SK-N-SH (cell line): ENCODE measurements at regions of chr19 and their contacts with region 1.

Region 1: GRCh38 chr19:11125994-11126685 is 29.4 kb downstream of the SPC24 start:
- DNase-seq: peak; percentile 82
- H3K4me3 ChIP-seq: no peak overlapping the region; a peak in 1 of 4 replicates
- H3K27ac ChIP-seq: no peak overlapping the region
- H3K4me1 ChIP-seq: no peaks in the 10 kb centered on the region
- H3K27me3 ChIP-seq: no peaks in the 10 kb centered on the region
- CTCF ChIP-seq: peak; percentile 90
- EP300 ChIP-seq: no peak
- RAD21 ChIP-seq: peak; percentile 67

Region 2: DNA sequence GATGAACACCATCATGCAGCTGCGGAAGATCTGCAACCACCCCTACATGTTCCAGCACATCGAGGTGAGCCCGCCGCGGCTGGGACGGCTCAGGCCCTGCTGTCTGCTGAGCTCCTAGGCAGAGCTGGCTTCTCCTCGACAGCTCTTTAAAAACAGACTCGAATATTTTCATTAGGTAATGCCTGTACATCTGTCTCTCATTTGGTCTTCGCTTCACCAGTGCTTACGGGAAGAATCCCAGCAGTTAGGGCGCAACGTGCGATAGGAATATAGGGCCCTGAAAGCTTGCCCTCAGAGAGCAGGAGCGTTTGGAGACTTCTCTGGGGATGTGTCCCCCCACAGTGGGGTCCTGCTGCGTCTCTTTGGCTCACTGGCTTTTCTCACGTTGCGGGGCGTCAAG is 100.7 kb before region 1 on chr19:
- CTCF ChIA-PET with region 1: interaction called, 11 read pairs
- POLR2A ChIA-PET with region 1: no interaction called
- DNase-seq: no peak
- H3K4me3 ChIP-seq: no peak overlapping the region
- H3K27ac ChIP-seq: no peak overlapping the region
- H3K4me1 ChIP-seq: no peaks in the 10 kb centered on the region; a peak in 1 of 4 replicates
- H3K27me3 ChIP-seq: no peaks in the 10 kb centered on the region
- CTCF ChIP-seq: no peak
- EP300 ChIP-seq: no peak
- RAD21 ChIP-seq: no peak

Region 3: GRCh38 chr19:11064831-11065303 is 61.3 kb before region 1 on chr19:
- CTCF ChIA-PET with region 1: interaction called, 10 read pairs
- POLR2A ChIA-PET with region 1: no interaction called
- DNase-seq: no peak
- H3K4me3 ChIP-seq: no peak overlapping the region
- H3K27ac ChIP-seq: no peak overlapping the region; a peak in 1 of 4 replicates
- H3K4me1 ChIP-seq: no peaks in the 10 kb centered on the region
- H3K27me3 ChIP-seq: no peaks in the 10 kb centered on the region
- CTCF ChIP-seq: no peak
- EP300 ChIP-seq: no peak
- RAD21 ChIP-seq: no peak

Region 4: GRCh38 chr19:11100049-11100448 is 26.1 kb before region 1 on chr19:
- CTCF ChIA-PET with region 1: interaction called, 15 read pairs
- POLR2A ChIA-PET with region 1: no interaction called
- DNase-seq: no peak
- H3K4me3 ChIP-seq: no peak overlapping the region
- H3K27ac ChIP-seq: no peak overlapping the region
- H3K4me1 ChIP-seq: peaks cover 0 to 18% of the 10 kb centered on the region in 2 experiments; a peak in 2 of 4 replicates
- H3K27me3 ChIP-seq: no peaks in the 10 kb centered on the region
- CTCF ChIP-seq: no peak
- EP300 ChIP-seq: no peak
- RAD21 ChIP-seq: no peak

Region 5: GRCh38 chr19:11137542-11138384 is 11.6 kb after region 1 on chr19:
- CTCF ChIA-PET with region 1: interaction called, 46 read pairs
- POLR2A ChIA-PET with region 1: no interaction called
- DNase-seq: peak; percentile 90
- H3K4me3 ChIP-seq: peak overlapping the region; percentile 22 to 45
- H3K27ac ChIP-seq: peak overlapping the region; percentile 83 to 86
- H3K4me1 ChIP-seq: peaks cover 20 to 27% of the 10 kb centered on the region in 2 experiments; a peak in 3 of 4 replicates
- H3K27me3 ChIP-seq: no peaks in the 10 kb centered on the region
- CTCF ChIP-seq: peak; percentile 75
- EP300 ChIP-seq: no peak; a peak in 1 of 4 replicates
- RAD21 ChIP-seq: peak; percentile 88

Region 6: DNA sequence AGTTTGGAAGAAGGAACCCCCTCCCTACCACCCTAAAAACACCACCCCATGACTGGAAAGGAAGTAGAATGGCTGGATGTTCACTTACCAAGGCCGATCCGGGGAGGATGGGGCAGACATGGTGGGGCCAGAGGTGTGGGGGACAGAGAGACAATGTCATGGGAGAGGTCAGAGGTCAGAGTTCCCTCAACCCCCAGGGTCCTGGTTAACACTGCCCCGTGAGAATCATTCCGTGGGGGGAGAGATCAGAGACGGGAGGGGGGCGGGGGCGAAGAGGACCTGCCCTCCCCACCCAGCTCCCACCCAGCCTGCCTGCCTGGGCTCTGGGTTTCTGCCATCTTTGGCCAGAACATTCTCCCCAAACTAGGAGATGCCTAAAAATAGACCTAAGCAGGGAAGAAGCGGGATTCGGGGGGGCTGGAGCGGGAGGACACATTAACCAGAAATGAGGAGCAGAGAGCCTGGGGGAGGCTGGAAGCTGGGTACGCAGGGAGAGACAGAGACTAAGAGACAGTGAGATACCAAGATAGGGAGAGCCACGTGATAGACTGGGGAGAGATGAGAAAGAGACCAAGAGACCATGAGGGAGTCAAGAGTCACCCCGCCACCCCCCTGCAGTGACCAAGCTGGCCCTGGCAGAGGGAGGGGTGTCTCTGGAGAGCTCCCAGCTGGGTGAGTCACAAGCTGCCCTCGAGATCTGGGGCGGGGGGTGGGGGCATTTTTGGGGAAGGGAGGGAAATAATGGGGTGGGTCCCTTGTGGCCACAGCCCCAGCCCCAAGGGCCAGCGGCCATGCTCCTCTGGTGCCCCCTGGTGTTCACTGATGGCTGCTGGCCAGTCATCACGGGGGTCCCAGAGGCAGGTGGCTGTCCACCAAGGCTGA is 77.3 kb after region 1 on chr19:
- CTCF ChIA-PET with region 1: interaction called, 21 read pairs
- POLR2A ChIA-PET with region 1: interaction called, 3 read pairs
- DNase-seq: peak; percentile 93
- H3K4me3 ChIP-seq: no peak overlapping the region
- H3K27ac ChIP-seq: peak overlapping the region; percentile 56 to 79; a peak in 3 of 4 replicates
- H3K4me1 ChIP-seq: peaks cover 4 to 8% of the 10 kb centered on the region in 2 experiments; a peak in 3 of 4 replicates
- H3K27me3 ChIP-seq: no peaks in the 10 kb centered on the region
- CTCF ChIP-seq: peak; percentile 79
- EP300 ChIP-seq: no peak
- RAD21 ChIP-seq: peak; percentile 82

Region 7: DNA sequence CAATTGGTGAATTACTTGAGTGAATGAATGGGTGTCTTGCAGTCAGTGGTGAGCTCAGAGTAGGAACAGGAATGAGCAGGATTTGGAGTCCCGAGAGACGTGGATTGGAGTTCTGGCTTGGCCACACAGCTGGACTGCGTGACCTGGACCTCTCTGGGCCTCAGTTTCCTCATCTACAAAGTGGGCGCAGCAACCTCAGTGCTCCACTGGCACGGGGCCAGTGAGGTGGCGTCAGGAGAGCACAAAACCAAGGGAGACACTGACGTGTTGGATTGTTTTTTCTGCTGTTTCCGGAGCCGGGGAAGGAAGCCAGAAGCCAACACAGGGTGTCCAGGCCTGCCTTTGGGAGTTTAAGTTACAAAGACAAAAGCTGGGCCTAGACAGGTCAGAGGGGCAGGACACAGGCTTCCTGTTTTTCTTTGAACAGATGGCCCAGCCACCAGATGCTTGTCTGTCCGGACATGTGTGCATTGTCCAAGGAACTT is 142.7 kb after region 1 on chr19:
- CTCF ChIA-PET with region 1: no interaction called
- POLR2A ChIA-PET with region 1: no interaction called
- DNase-seq: peak; percentile 75
- H3K4me3 ChIP-seq: no peak overlapping the region
- H3K27ac ChIP-seq: peak overlapping the region; percentile 56 to 66
- H3K4me1 ChIP-seq: peaks cover 9 to 10% of the 10 kb centered on the region in 2 experiments; a peak in 1 of 4 replicates
- H3K27me3 ChIP-seq: no peaks in the 10 kb centered on the region
- CTCF ChIP-seq: no peak
- EP300 ChIP-seq: peak in 1 of 2 experiments; percentile 24; a peak in 1 of 4 replicates
- RAD21 ChIP-seq: 0 out of 2 replicates have a peak, but pooled peaks have one; percentile 6